ENCODE measurements at regions of chr1 and their contacts with region 1.

Region 1: DNA sequence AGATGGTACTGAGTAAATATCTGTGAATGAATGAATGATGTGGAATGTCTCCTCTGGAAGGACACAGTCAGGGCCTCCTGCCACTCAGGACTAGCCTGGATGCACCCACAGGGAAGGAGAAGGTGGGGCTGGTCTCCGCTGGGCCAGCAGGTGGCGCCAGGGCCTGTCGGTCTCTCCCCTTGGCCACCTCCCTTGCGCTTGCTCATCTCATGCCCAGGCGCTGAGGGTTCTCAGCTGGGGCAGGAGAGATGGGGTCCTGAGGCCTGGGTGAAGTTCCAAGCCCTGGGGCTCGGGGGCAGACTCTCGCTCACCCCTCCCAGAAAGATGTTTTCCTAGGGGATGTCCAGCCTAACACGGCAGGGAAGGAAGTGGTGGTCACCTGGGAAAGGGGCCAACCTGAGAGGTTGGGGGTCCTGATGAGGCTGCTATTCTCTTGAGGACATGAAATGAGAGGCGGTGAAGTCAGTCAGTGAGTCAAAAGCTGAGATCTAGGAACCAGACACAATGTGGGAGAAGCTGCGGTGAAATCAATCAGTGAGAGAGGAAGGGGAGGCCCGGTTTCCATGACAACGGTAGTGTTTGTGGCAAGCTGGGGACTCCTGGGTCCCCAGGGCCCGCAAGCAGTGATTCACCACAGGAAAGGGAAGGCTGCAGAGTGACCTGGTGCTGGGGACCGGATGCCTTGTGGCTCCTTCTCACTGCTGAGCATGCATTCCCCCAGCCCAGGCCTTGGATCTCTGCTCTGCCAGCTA is 14.6 kb upstream of the MEX3A start:
- DNase-seq: peak; percentile 91 to 92
- H3K4me3 ChIP-seq: no peak overlapping the region
- H3K27ac ChIP-seq: peak overlapping the region; percentile 23 to 89 (median 64)
- H3K4me1 ChIP-seq: peaks cover 8 to 31% of the 10 kb centered on the region in 2 donors
- H3K27me3 ChIP-seq: no peaks in the 10 kb centered on the region
- CTCF ChIP-seq: peak; percentile 88 to 98 (median 94)
- POLR2A ChIP-seq: no peak

Region 2: GRCh38 chr1:156033011-156033410 is 63.8 kb before region 1 on chr1:
- intact Hi-C with region 1: no loop called
- DNase-seq: no peak
- H3K4me3 ChIP-seq: no peak overlapping the region
- H3K27ac ChIP-seq: no peak overlapping the region
- H3K4me1 ChIP-seq: no peaks in the 10 kb centered on the region
- H3K27me3 ChIP-seq: no peaks in the 10 kb centered on the region
- CTCF ChIP-seq: no peak
- POLR2A ChIP-seq: no peak

Region 3: GRCh38 chr1:156129706-156130581 is 33.1 kb after region 1 on chr1:
- intact Hi-C with region 1: loop called (anchors 2 kb)
- DNase-seq: peak; percentile 91
- H3K4me3 ChIP-seq: no peak overlapping the region
- H3K27ac ChIP-seq: peak overlapping the region; percentile 89 to 98 (median 89)
- H3K4me1 ChIP-seq: peaks cover 49 to 58% of the 10 kb centered on the region in 2 donors
- H3K27me3 ChIP-seq: no peaks in the 10 kb centered on the region
- CTCF ChIP-seq: peak; percentile 79 to 99 (median 96)
- POLR2A ChIP-seq: peak in 1 of 2 donors; percentile 32